PC-9 (cell line): ENCODE measurements at regions of chr4 and their contacts with region 1.

Region 1: GRCh38 chr4:1289207-1290164 is at the start of gene MAEA:
- DNase-seq: peak; percentile 90 to 97
- H3K4me3 ChIP-seq: peak within 1 kb of the TSS; percentile 77
- H3K27ac ChIP-seq: peak within 1 kb of the TSS; percentile 53
- H3K4me1 ChIP-seq: peaks cover 27% of the 10 kb centered on the region
- H3K27me3 ChIP-seq: no peaks in the 10 kb centered on the region
- CTCF ChIP-seq: no peak
- total RNA-seq, gene MAEA: 79.4 and 88.6 TPM in 2 replicates

Region 2: GRCh38 chr4:1329408-1330371 is 40.2 kb after region 1 on chr4:
- CTCF ChIA-PET with region 1: no interaction called
- POLR2A ChIA-PET with region 1: interaction called, 8 read pairs
- intact Hi-C with region 1: loop called (anchors 5 kb)
- DNase-seq: peak; percentile 92 to 97
- H3K4me3 ChIP-seq: no peak overlapping the region
- H3K27ac ChIP-seq: peak overlapping the region; percentile 85
- H3K4me1 ChIP-seq: peaks cover 32% of the 10 kb centered on the region
- H3K27me3 ChIP-seq: no peaks in the 10 kb centered on the region
- CTCF ChIP-seq: no peak